Caco-2 (cell line): ENCODE measurements at regions of chr12 and their contacts with region 1.

Region 1: DNA sequence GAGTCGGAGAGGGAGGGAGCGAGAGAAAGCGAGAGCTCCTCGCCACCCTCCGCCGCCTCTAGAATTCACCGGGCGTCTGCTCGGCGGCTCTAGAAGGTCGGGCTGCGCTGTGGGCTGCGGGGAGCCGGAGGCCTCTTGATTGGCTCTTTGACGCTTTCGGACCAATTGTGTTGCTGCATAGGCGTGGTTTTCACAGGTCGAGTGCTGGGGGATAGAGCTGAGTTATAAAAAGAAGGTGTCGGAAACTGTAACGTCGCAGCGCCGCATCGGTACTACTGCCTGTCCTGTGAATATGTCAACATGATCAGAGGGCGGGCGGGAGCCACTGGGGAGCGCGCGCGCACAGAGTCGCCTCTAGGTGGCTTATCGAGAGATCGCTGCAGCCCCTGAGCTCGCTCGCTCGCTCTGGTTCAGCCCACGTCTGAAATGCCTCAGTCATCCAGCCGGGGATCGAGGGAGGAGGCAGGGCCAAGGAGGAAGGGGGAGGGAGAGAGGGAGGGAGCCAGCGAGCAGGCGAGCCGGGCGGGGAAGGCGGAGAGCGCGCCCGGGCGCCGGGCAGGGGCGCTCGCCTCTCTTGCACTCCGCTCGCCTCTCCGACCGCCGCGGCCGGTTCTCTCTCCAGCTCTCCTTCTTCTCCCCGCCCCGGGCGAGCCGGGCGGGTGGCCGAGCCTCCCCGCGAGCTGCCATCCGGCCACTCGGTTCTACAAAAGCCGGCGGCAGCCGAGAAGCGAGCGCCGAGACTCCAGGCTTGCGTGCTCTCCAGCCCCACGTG is at the start of gene TBX3:
- DNase-seq: peak; percentile 96 to 99
- H3K4me3 ChIP-seq: peak within 1 kb of the TSS; percentile 65
- H3K4me3 Mint-ChIP-seq: peak within 1 kb of the TSS; percentile 90
- H3K27ac Mint-ChIP-seq: peak within 1 kb of the TSS; percentile 93
- H3K4me1 ChIP-seq: peaks cover 25% of the 10 kb centered on the region
- H3K4me1 Mint-ChIP-seq: peaks cover 29% of the 10 kb centered on the region
- H3K27me3 ChIP-seq: no peaks in the 10 kb centered on the region
- H3K27me3 Mint-ChIP-seq: no peaks in the 10 kb centered on the region
- CTCF ChIP-seq: peak; percentile 58 to 67
- total RNA-seq, gene TBX3: 47.2 and 54.0 TPM in 2 replicates

Region 2: DNA sequence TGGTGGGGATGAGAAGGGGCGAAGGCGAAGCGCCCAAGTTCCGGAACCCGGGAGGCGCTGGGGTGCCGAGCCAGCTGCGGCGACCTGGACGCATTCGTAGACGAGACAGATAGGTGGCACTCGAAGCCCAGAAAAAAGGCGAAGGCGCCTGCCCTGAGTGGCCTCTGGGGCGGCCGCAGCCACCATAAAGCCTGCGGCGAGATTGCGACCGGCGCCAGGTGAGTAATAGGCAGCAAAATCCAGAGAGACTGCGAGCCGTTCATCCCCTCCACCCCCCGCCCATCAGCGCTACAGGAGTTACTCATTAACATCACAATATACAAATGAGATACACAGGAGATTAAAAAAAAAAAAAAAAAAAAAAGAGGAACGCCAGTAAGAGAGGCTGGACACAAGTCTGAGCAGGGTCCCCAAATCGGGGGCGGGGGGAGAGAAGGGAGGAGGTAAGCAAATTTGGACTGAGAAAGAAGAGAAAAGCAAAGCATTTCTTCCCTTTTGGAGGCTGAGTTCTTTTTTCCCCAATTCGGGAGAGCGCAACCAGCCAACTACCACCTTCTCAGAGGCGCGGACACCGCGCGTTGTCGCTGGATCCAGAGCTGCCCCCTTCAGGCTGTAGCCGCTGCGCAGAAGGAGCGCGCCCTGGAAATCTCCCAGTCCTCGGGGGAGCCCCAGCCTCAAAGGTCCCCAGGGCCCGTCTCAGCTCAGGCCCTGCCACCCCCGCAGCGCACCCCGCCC is 16.0 kb before region 1 on chr12:
- CTCF ChIA-PET with region 1: interaction called, 11 read pairs
- POLR2A ChIA-PET with region 1: interaction called, 17 read pairs
- intact Hi-C with region 1: no loop called
- DNase-seq: peak; percentile 93 to 95
- H3K4me3 ChIP-seq: peak overlapping the region; percentile 32
- H3K4me3 Mint-ChIP-seq: peak overlapping the region; percentile 74
- H3K27ac Mint-ChIP-seq: peak overlapping the region; percentile 79
- H3K4me1 ChIP-seq: peaks cover 13% of the 10 kb centered on the region
- H3K4me1 Mint-ChIP-seq: no peaks in the 10 kb centered on the region
- H3K27me3 ChIP-seq: no peaks in the 10 kb centered on the region
- H3K27me3 Mint-ChIP-seq: no peaks in the 10 kb centered on the region
- CTCF ChIP-seq: peak; percentile 59 to 76

Region 3: GRCh38 chr12:114767906-114768722 is 83.8 kb after region 1 on chr12:
- CTCF ChIA-PET with region 1: interaction called, 27 read pairs
- POLR2A ChIA-PET with region 1: interaction called, 7 read pairs
- intact Hi-C with region 1: loop called (anchors 1 kb)
- DNase-seq: peak; percentile 51 to 67
- H3K4me3 ChIP-seq: no peak overlapping the region
- H3K4me3 Mint-ChIP-seq: peak overlapping the region; percentile 2
- H3K27ac Mint-ChIP-seq: peak overlapping the region; percentile 99
- H3K4me1 ChIP-seq: peaks cover 34% of the 10 kb centered on the region
- H3K4me1 Mint-ChIP-seq: peaks cover 17% of the 10 kb centered on the region
- H3K27me3 ChIP-seq: no peaks in the 10 kb centered on the region
- H3K27me3 Mint-ChIP-seq: no peaks in the 10 kb centered on the region
- CTCF ChIP-seq: no peak

Region 4: GRCh38 chr12:114858383-114859146 is 174.3 kb after region 1 on chr12:
- CTCF ChIA-PET with region 1: interaction called, 3 read pairs
- POLR2A ChIA-PET with region 1: interaction called, 4 read pairs
- intact Hi-C with region 1: loop called (anchors 1 kb)
- DNase-seq: peak; percentile 66 to 67
- H3K4me3 ChIP-seq: no peak overlapping the region
- H3K4me3 Mint-ChIP-seq: no peak overlapping the region
- H3K27ac Mint-ChIP-seq: no peak overlapping the region
- H3K4me1 ChIP-seq: no peaks in the 10 kb centered on the region
- H3K4me1 Mint-ChIP-seq: peaks cover 10% of the 10 kb centered on the region
- H3K27me3 ChIP-seq: no peaks in the 10 kb centered on the region
- H3K27me3 Mint-ChIP-seq: no peaks in the 10 kb centered on the region
- CTCF ChIP-seq: peak; percentile 57 to 67

Region 5: DNA sequence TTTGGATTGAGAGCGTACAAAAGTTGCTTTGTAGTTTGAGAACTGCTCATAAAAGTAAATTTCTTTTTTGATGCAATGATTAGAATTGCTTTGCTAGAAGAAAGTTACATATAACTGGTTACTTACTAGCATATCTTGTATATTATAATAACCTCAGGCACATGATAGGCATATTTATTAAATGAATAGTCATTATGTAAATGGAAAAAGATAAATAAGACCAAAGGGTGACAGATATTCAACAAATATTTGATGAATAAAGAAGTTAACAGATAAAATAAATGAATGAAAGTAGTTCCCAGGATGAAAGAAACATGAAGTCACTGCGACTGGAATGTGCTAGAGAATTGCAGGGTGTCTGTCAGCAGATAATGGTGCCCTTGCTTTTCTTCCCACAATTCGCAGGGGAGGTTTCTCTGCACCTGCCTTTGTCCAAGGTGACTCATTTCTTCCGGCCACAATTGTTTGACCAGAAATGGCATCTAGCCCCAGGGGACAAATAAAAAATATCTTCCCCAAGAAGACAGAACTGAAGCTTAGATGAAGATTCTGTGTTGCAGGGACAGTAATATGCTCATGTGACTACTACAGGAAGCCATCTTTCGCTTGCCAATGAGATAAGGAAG is 315.6 kb after region 1 on chr12:
- CTCF ChIA-PET with region 1: no interaction called
- POLR2A ChIA-PET with region 1: no interaction called
- intact Hi-C with region 1: loop called (anchors 10 kb)
- DNase-seq: peak; percentile 74 to 77
- H3K4me3 ChIP-seq: no peak overlapping the region
- H3K4me3 Mint-ChIP-seq: peak overlapping the region; percentile 11
- H3K27ac Mint-ChIP-seq: peak overlapping the region; percentile 60
- H3K4me1 ChIP-seq: peaks cover 24% of the 10 kb centered on the region; the same call in 1 of the 2 replicates
- H3K4me1 Mint-ChIP-seq: peaks cover 29% of the 10 kb centered on the region
- H3K27me3 ChIP-seq: no peaks in the 10 kb centered on the region
- H3K27me3 Mint-ChIP-seq: no peaks in the 10 kb centered on the region
- CTCF ChIP-seq: no peak

Region 6: GRCh38 chr12:115243933-115244807 is 559.9 kb after region 1 on chr12:
- CTCF ChIA-PET with region 1: no interaction called
- POLR2A ChIA-PET with region 1: no interaction called
- intact Hi-C with region 1: no loop called
- DNase-seq: no peak
- H3K4me3 ChIP-seq: no peak overlapping the region
- H3K4me3 Mint-ChIP-seq: no peak overlapping the region
- H3K27ac Mint-ChIP-seq: no peak overlapping the region
- H3K4me1 ChIP-seq: no peaks in the 10 kb centered on the region
- H3K4me1 Mint-ChIP-seq: no peaks in the 10 kb centered on the region
- H3K27me3 ChIP-seq: no peaks in the 10 kb centered on the region; the same call in 1 of the 2 replicates
- H3K27me3 Mint-ChIP-seq: peaks cover 5% of the 10 kb centered on the region
- CTCF ChIP-seq: no peak